AG04449 (cell line): ENCODE measurements at regions of chr1 and their contacts with region 1.

Region 1: GRCh38 chr1:110338886-110339406 is at the start of gene RBM15:
- DNase-seq: peak; percentile 100
- H3K4me3 ChIP-seq: peak within 1 kb of the TSS; percentile 98
- CTCF ChIP-seq: no peak

Region 2: GRCh38 chr1:110068646-110069403 is 270.1 kb before region 1 on chr1:
- CTCF ChIA-PET with region 1: no interaction called
- POLR2A ChIA-PET with region 1: no interaction called
- DNase-seq: no peak
- H3K4me3 ChIP-seq: no peak overlapping the region
- CTCF ChIP-seq: no peak

Region 3: GRCh38 chr1:110196917-110197765 is 141.8 kb before region 1 on chr1:
- CTCF ChIA-PET with region 1: interaction called, 64 read pairs
- POLR2A ChIA-PET with region 1: no interaction called
- DNase-seq: no peak
- H3K4me3 ChIP-seq: no peak overlapping the region
- CTCF ChIP-seq: peak; percentile 92

Region 4: DNA sequence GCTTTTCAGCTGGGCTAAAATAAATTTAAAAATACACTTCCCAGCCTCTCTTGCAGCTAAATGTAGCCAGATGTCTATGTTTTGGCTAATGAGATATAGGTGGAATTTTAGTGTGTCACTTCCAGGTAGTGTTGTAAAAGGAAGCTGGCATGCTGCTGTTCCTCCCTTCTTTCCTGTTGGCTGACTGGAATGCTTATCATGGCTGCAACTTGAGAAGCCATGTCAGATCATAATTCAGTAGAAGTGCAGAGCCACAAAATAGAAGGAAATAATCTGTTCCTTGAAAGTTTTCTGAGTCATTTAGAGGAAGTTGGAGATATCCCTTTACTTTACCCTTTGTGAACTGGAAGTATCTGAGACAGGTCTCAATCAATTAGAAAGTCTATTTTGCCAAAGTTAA is 10.7 kb before region 1 on chr1:
- CTCF ChIA-PET with region 1: interaction called, 38 read pairs
- POLR2A ChIA-PET with region 1: interaction called, 3 read pairs
- DNase-seq: no peak
- H3K4me3 ChIP-seq: no peak overlapping the region
- CTCF ChIP-seq: no peak

Region 5: GRCh38 chr1:110412576-110412975 is 73.6 kb after region 1 on chr1:
- CTCF ChIA-PET with region 1: interaction called, 23 read pairs
- POLR2A ChIA-PET with region 1: interaction called, 5 read pairs
- DNase-seq: no peak
- H3K4me3 ChIP-seq: no peak overlapping the region
- CTCF ChIP-seq: peak; percentile 83